HEK293 (cell line): ENCODE measurements at regions of chr1 and their contacts with region 1.

Region 1: GRCh38 chr1:237258871-237259270 is 216.9 kb downstream of the RYR2 start:
- H3K4me3 ChIP-seq: no peak overlapping the region
- H3K27ac ChIP-seq: no peak overlapping the region
- H3K4me1 ChIP-seq: peaks cover 2% of the 10 kb centered on the region; the same call in 1 of the 2 replicates
- CTCF ChIP-seq: no peak

Region 2: GRCh38 chr1:236602171-236602570 is 656.7 kb before region 1 on chr1:
- CTCF ChIA-PET with region 1: no interaction called
- POLR2A ChIA-PET with region 1: no interaction called
- H3K4me3 ChIP-seq: no peak overlapping the region
- H3K27ac ChIP-seq: no peak overlapping the region
- H3K4me1 ChIP-seq: peaks cover 7% of the 10 kb centered on the region
- CTCF ChIP-seq: no peak

Region 3: GRCh38 chr1:237074371-237075102 is 184.3 kb before region 1 on chr1:
- CTCF ChIA-PET with region 1: no interaction called
- POLR2A ChIA-PET with region 1: no interaction called
- H3K4me3 ChIP-seq: no peak overlapping the region
- H3K27ac ChIP-seq: no peak overlapping the region
- H3K4me1 ChIP-seq: no peaks in the 10 kb centered on the region
- CTCF ChIP-seq: no peak

Region 4: DNA sequence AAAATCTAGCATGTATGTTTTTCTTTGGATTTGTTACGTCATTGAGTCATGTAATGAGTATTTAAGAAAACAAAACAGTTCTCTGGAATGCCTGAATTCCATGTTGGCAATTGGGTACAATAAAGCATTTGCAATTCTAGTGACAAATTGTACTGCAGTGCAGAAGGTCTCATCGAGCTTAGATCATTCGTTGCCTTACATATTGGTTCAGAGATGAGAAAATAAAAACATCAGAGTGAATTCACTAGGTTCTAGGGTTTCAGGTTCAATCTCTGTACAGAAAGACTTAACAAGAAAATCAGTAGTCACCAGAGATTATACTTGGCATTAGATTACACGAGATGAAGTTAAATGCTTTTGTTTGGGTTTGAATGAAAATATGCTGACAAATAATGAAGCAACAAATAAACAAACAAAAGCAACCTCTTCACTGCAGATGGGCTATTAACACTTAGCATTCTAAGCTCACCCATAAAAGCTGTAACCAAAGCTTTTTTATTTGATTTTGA is 92.2 kb before region 1 on chr1:
- CTCF ChIA-PET with region 1: no interaction called
- POLR2A ChIA-PET with region 1: interaction called, 18 read pairs
- H3K4me3 ChIP-seq: no peak overlapping the region
- H3K27ac ChIP-seq: no peak overlapping the region
- H3K4me1 ChIP-seq: peaks cover 18% of the 10 kb centered on the region
- CTCF ChIP-seq: no peak